ENCODE measurements at regions of chr2 and their contacts with region 1.

Region 1: DNA sequence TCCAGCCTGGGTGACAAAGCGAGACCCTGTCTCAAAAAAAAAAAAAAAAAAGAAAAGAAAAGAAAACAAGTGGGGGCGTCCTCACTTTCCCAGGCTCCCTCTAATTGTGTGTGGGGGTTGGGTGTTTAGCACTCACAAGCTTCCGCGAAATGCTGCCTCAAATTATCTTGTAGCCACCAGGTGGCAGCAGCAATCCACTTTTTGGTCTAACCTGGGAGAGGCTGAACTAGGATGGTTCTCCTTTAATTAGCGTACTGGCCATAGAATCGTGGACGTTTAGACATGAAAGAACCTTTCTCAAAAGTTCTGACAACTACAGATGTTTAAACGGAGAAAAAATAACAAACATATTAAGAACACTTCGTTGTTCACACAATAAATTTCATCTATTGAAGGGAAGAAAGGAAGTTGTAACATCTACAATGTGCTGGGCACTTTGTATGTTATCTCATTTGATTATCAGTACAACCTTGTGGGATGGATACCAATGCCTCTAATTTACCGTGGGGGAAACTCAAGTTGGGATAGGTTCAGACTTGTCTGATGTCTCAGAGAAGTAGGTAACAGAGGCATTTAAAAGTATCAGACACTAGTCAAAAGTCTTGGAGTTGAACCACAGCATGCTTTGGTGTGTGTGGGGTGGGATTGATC is 122.7 kb upstream of the NABP1 start:
- DNase-seq: peak; percentile 68
- H3K4me3 Mint-ChIP-seq: no peak overlapping the region
- H3K27ac Mint-ChIP-seq: no peak overlapping the region
- H3K4me1 Mint-ChIP-seq: peaks cover 13% of the 10 kb centered on the region
- H3K27me3 Mint-ChIP-seq: peaks cover 14% of the 10 kb centered on the region

Region 2: DNA sequence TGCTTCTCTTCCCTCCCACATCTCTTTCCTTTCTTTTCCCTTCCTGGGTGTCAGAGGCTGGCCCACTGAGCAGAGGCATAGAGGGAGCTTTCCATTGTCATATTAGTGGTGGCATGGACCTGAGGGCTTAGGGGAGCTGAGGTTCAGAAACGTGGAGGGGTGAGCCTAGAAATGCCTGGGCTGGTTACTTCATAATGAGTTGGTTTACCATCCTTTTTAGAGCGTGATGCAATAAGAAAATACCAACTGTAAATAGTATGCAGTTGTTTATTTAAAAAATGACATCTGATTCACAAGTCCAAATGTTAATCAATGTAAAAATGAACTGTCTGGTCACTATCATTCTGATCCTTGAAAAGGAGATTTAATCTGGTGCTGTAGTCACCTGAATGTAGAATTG is 263.7 kb before region 1 on chr2:
- intact Hi-C with region 1: no loop called
- DNase-seq: no peak
- H3K4me3 Mint-ChIP-seq: no peak overlapping the region
- H3K27ac Mint-ChIP-seq: no peak overlapping the region
- H3K4me1 Mint-ChIP-seq: peaks cover 19% of the 10 kb centered on the region
- H3K27me3 Mint-ChIP-seq: no peaks in the 10 kb centered on the region

Region 3: GRCh38 chr2:191691016-191691735 is 136.0 kb after region 1 on chr2:
- intact Hi-C with region 1: loop called (anchors 1 kb)
- DNase-seq: no peak
- H3K4me3 Mint-ChIP-seq: no peak overlapping the region
- H3K27ac Mint-ChIP-seq: peak overlapping the region; percentile 70
- H3K4me1 Mint-ChIP-seq: peaks cover 43% of the 10 kb centered on the region
- H3K27me3 Mint-ChIP-seq: no peaks in the 10 kb centered on the region

Measured in activated T-helper 2 cell treated with anti-CD3 and anti-CD28 coated beads, Interferon-gamma antibody, Interleukin-2, Interleukin-4, amounts not matched to agents 10 μg/mL and 5 μg/mL and 100 μg/mL, durations not matched to agents 14 hours and 24 hours and 36 hours (primary cell).